ENCODE measurements at regions of chr20 and their contacts with region 1.

Region 1: DNA sequence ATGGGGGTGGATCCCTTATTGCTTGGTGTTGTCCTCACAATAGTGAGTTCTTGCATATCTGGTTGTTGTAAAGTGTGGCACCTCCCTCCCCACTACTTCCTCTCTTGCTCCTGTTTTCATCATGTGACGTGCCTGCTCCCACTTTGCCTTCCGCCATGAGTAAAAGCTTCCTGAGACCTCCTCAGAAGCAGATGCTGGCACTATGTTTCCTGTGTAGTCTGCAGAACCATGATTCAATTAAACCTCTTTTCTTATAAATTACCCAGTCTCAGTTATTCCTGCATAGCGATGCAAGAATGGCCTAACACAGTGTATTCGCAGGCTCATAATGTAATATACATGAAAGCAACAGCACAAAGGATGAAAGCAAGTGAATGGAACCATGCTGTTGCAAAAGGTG is 28.4 kb upstream of the ANKRD60 start:
- DNase-seq: no peak
- ATAC-seq: no peak
- H3K4me3 ChIP-seq: no peak overlapping the region
- H3K27ac ChIP-seq: no peak overlapping the region
- H3K4me1 ChIP-seq: peaks cover 3% of the 10 kb centered on the region; the same call in 1 of the 2 replicates
- H3K27me3 ChIP-seq: no peaks in the 10 kb centered on the region
- CTCF ChIP-seq: no peak

Region 2: DNA sequence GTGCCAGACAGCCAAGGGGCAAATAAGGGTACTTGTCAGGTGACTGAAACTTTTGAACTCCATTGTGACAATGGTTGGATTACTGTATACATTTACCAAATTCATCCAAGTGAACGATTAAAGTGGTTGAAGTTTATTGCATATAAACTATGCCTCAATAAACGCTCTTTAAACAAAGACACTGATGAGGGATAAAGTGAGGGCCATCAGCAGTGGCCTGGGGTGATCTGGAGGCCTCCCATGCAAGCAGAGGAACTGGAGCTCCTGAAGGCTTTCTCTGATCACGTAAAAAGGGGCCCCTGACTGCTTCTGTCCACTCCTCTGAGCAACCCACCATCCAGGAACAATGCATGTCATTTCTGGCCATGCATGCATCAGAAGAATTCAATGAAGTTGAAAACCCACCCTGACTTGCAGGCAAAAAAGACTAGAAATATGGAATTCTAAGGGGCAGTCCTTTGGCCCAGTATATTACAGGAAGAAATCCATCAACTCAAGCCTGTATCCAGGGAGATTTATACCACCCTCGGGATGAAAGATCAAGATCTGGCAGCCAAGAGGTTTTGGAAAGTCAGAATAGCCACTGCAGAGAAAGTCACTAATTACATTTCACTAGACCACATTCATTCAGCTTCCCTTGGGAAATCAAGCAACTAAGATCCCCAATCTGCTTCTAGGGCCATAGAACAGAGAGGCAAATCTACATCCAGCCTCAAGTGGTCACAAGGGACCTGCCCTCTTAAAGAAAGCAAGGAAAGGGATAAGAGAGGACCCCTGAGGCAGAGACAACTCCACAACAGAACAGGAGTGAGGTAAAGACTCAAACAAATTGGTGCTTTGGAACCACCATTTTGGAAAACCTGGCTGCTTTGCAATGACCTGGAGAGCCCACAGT is 21.0 kb after region 1 on chr20:
- CTCF ChIA-PET with region 1: no interaction called
- POLR2A ChIA-PET with region 1: no interaction called
- in situ Hi-C with region 1: no loop called
- intact Hi-C with region 1: no loop called
- DNase-seq: no peak
- ATAC-seq: no peak
- H3K4me3 ChIP-seq: no peak overlapping the region
- H3K27ac ChIP-seq: no peak overlapping the region
- H3K4me1 ChIP-seq: no peaks in the 10 kb centered on the region
- H3K27me3 ChIP-seq: no peaks in the 10 kb centered on the region
- CTCF ChIP-seq: no peak

Region 3: GRCh38 chr20:58479726-58480440 is 223.0 kb after region 1 on chr20:
- CTCF ChIA-PET with region 1: interaction called, 16 read pairs
- POLR2A ChIA-PET with region 1: no interaction called
- in situ Hi-C with region 1: no loop called
- intact Hi-C with region 1: no loop called
- DNase-seq: no peak
- ATAC-seq: no peak
- H3K4me3 ChIP-seq: no peak overlapping the region
- H3K27ac ChIP-seq: no peak overlapping the region
- H3K4me1 ChIP-seq: no peaks in the 10 kb centered on the region
- H3K27me3 ChIP-seq: no peaks in the 10 kb centered on the region
- CTCF ChIP-seq: no peak

Measured in Panc1 (cell line).